ENCODE measurements at regions of chr12 and their contacts with region 1.

Region 1: GRCh38 chr12:110600254-110600653 is 13.7 kb upstream of the TCTN1 start:
- DNase-seq: no peak
- H3K4me3 ChIP-seq: no peak overlapping the region
- H3K27ac ChIP-seq: no peak overlapping the region
- H3K4me1 ChIP-seq: no peaks in the 10 kb centered on the region
- H3K27me3 ChIP-seq: no peaks in the 10 kb centered on the region
- CTCF ChIP-seq: peak; percentile 26 to 61 (median 41)
- EP300 ChIP-seq: no peak
- POLR2A ChIP-seq: no peak

Region 2: DNA sequence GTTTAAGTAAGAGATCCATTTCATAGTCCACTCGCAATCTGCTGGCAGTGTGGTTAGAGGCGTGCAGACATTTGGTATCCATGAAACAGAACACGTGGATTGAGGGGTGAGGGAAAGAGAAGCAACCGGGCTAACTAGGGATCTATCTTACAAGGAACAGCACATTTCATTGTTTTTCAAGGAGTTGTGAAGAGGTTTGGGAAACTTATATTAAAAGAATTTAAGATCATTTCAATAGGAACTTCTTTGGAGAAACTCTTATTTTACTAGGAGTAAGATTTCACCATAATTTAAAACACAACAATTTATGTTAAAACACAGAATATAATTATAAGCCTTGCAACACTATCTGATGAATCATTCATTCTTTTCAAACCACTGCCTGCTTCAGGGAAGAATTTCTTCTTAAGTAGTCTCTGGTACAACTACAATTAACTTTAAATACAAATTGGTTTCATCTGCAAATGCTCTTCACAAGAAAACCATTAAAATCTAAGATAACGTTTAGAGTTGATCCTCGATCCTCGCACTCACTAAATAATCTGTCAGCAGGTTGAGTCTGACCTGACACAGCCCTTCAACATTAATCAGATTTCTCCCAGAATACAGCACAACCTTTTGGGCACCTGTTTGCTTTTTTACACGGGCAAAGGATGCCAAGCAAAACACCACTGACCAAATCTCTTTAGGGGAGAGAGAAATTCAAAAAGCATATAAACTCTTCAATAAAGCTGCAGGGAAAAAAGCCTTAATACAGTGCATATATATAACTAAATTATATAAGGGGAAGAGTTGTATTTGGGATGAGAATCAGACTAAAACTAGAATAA is 44.5 kb before region 1 on chr12:
- in situ Hi-C with region 1: loop called in 1 of 4 experiments (anchors 5 kb)
- intact Hi-C with region 1: no loop called
- DNase-seq: no peak
- H3K4me3 ChIP-seq: no peak overlapping the region
- H3K27ac ChIP-seq: peak overlapping the region in 3 of 4 donors; percentile 15 to 38 (median 27)
- H3K4me1 ChIP-seq: peaks cover 13 to 57% (median 25%) of the 10 kb centered on the region in 4 donors
- H3K27me3 ChIP-seq: no peaks in the 10 kb centered on the region
- CTCF ChIP-seq: no peak
- EP300 ChIP-seq: no peak
- POLR2A ChIP-seq: no peak

Region 3: GRCh38 chr12:110583137-110584059 is 16.9 kb before region 1 on chr12 and contains the start of gene PPTC7:
- in situ Hi-C with region 1: no loop called
- intact Hi-C with region 1: no loop called
- DNase-seq: peak; percentile 98
- H3K4me3 ChIP-seq: peak within 1 kb of the TSS; percentile 67 to 96 (median 92)
- H3K27ac ChIP-seq: peak within 1 kb of the TSS; percentile 96 to 98 (median 98)
- H3K4me1 ChIP-seq: peaks cover 26 to 56% (median 45%) of the 10 kb centered on the region in 4 donors
- H3K27me3 ChIP-seq: no peaks in the 10 kb centered on the region
- CTCF ChIP-seq: no peak
- EP300 ChIP-seq: no peak
- POLR2A ChIP-seq: peak; percentile 83
- total RNA-seq, gene PPTC7: 25.3 to 36.4 (median 27.1) TPM

Region 4: DNA sequence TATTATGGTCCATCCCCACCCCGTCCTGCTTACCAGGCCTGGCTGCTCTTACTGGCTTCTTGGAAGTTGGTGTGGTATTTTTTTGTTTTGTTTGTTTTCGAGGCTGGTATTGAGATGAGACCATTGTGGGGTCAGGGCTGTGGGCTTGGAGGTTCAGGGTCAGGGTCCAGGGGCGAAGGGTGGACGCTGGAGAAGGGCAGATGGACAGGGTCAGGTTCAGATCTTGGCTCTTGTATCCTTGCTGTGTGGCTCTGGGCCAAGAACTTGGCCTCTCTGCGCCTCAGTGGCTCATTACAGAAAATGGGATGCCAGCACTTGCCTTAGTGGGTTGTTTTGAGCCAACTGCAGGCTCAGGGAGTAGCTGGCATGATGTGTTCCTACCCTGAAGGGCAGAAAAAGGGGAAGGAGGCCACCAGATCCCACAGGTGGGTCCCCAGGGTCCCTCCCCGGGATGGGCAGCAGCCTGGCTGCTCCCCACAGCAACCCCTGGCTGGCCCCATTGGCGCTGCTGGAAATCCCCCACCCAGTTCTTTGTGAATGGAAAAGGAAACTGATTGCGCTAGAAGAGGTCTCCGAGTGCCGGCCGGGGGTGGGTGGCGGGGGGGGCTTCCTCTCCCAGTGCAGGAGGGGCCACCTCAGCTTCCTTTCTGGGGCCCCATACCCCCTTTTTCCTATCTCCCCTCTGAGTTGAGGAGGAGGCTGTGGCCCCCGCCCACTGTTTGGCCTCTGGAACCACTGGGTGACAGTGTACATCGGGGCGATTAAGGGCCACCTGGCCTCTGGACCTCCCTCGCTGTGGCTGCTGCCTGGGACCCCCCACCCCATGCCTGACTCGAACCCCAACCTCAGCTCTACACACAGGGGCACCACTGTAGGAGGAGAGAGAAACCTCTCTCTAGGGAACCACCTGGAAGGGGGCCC is 830.4 kb after region 1 on chr12:
- in situ Hi-C with region 1: no loop called
- intact Hi-C with region 1: no loop called
- DNase-seq: no peak
- H3K4me3 ChIP-seq: peak overlapping the region in 1 of 4 donors; percentile 0
- H3K27ac ChIP-seq: peak overlapping the region; percentile 76 to 85 (median 80)
- H3K4me1 ChIP-seq: peaks cover 73 to 100% (median 94%) of the 10 kb centered on the region in 4 donors
- H3K27me3 ChIP-seq: no peaks in the 10 kb centered on the region
- CTCF ChIP-seq: no peak
- EP300 ChIP-seq: no peak
- POLR2A ChIP-seq: no peak

Measured in transverse colon (tissue), 4 donors.